Dendritic cell treated with granulocyte-macrophage colony-stimulating factor and Interleukin-4, amounts not matched to agents 40 ng/mL and 50 ng/mL, for 4 days (primary cell): ENCODE measurements at regions of chr7 and their contacts with region 1.

Region 1: DNA sequence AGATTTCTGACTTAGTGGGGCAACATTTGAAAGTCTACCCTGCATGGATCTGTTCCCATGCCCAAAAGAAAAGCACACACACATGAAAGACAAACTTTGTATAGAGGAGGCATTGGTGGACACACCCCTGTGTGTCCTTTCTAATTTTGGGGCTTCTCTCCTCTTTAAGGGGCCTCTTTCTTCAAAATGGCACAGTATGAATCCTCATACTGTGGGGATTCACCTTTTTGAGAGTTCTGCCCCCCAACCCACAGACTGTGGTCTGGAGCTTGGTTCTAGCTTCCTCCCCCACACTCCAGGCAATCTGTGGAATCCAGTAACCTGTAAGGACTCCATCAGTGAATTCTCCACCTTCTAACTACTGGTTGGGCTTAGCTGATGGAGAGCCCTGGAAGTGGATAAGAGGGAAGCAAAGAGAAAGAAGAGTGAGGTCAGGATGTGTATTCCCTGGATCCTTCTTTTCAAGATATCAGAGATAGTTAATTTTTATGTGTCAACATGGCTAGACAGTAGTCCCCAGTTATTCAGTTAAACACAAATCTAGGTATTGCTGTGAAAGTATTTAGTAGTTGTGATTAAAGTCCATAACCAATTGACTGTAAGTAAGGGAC is 32.4 kb upstream of the CDK6 start:
- H3K4me3 Mint-ChIP-seq: no peak overlapping the region
- H3K27ac Mint-ChIP-seq: no peak overlapping the region
- H3K4me1 Mint-ChIP-seq: no peaks in the 10 kb centered on the region
- H3K27me3 Mint-ChIP-seq: no peaks in the 10 kb centered on the region

Region 2: DNA sequence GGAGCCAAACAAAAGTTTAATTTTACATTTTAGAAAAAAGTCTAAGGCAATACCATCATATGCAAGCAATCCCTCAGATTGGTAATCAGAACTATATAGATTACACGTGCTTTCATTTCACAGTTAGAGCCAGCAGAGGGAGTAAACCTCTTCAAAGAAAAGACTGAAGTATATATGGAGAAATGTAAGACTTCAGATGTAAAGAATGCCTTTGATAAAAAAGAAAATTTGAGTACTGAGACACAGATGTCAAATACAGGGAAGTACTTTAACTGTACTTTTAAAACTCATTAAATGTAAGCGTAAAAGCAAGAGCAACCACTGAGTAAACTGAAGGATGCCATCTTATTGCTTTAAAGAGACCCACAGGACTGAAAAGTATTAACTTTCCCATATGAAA is 177.2 kb before region 1 on chr7:
- intact Hi-C with region 1: loop called (anchors 2 kb)
- H3K4me3 Mint-ChIP-seq: no peak overlapping the region
- H3K27ac Mint-ChIP-seq: no peak overlapping the region
- H3K4me1 Mint-ChIP-seq: peaks cover 13% of the 10 kb centered on the region
- H3K27me3 Mint-ChIP-seq: no peaks in the 10 kb centered on the region

Region 3: GRCh38 chr7:93043385-93043985 is 174.7 kb after region 1 on chr7:
- intact Hi-C with region 1: loop called (anchors 10 kb)
- H3K4me3 Mint-ChIP-seq: no peak overlapping the region
- H3K27ac Mint-ChIP-seq: no peak overlapping the region
- H3K4me1 Mint-ChIP-seq: peaks cover 11% of the 10 kb centered on the region
- H3K27me3 Mint-ChIP-seq: no peaks in the 10 kb centered on the region